ENCODE measurements at regions of chr14 and their contacts with region 1.

Region 1: GRCh38 chr14:65824285-65824977 is 411.9 kb downstream of the FUT8 start:
- DNase-seq: peak; percentile 21
- H3K4me3 ChIP-seq: no peak overlapping the region
- CTCF ChIP-seq: peak; percentile 87

Region 2: GRCh38 chr14:65164068-65164824 is 660.2 kb before region 1 on chr14:
- CTCF ChIA-PET with region 1: interaction called, 201 read pairs
- POLR2A ChIA-PET with region 1: no interaction called
- DNase-seq: no peak
- H3K4me3 ChIP-seq: no peak overlapping the region
- CTCF ChIP-seq: peak; percentile 22

Region 3: DNA sequence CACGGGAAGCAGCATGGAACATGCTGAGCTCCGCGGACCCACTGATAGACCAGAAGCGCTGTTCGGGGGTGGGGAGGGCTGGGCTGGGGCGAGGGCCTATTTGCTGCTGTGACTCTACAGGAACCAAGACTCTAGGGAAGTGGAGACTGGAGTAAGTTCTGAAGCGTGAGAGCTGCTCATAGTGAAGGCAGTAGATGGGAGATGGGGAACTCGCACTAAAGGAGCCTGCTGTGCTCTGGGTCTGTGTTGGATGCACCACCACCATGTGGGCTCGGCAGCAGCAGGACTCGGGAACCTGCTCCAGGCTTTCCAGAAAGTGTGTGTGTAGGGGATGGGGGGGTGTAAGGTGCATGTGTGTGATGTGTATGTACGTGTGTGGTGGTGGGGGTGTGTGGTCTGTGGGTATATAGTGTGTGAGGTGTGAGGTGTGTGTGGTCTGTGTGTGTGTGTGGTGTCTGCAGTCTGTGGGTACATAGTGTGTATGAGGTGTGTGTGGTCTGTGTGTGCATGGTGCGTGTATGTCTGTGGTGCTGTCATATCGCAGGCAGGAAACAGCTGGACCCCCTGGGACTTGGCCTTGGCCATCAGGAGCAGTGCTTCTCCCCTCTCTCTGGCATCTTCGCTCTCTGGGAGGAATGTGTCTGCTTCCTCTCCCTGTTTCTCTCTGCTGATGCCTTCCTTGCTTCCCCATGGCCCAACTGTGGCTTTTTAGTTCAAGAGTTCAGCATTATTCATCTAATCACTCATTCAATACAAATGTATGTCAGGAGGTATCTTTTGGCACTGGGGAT is 33.0 kb before region 1 on chr14:
- CTCF ChIA-PET with region 1: interaction called, 24 read pairs
- POLR2A ChIA-PET with region 1: no interaction called
- DNase-seq: peak; percentile 9
- H3K4me3 ChIP-seq: no peak overlapping the region
- CTCF ChIP-seq: no peak

Region 4: DNA sequence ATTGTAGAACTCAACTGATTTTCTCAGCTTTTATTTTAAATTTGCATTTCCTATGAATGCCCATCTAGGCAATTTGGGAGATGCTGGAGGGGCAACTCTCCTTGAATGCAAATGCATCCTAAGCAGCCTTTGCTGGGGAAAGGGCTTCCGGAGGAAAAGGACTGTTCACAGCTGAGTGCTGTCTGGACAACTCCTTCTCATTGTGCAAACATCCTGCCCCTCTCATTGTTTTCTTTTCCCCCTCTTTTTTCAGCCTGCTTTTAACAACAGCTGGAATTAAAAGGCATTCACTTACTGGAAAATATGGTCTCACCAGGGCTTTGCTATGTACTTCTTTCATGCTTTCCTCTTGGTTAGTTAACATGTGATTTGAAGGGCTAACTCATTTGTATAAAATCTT is 14.1 kb before region 1 on chr14:
- CTCF ChIA-PET with region 1: interaction called, 79 read pairs
- POLR2A ChIA-PET with region 1: no interaction called
- DNase-seq: no peak
- H3K4me3 ChIP-seq: no peak overlapping the region
- CTCF ChIP-seq: no peak

Region 5: GRCh38 chr14:65847075-65847847 is 22.8 kb after region 1 on chr14:
- CTCF ChIA-PET with region 1: interaction called, 17 read pairs
- POLR2A ChIA-PET with region 1: no interaction called
- DNase-seq: no peak
- H3K4me3 ChIP-seq: no peak overlapping the region
- CTCF ChIP-seq: no peak

Region 6: GRCh38 chr14:66105815-66106214 is 281.4 kb after region 1 on chr14:
- CTCF ChIA-PET with region 1: no interaction called
- POLR2A ChIA-PET with region 1: no interaction called
- DNase-seq: peak; percentile 7
- H3K4me3 ChIP-seq: no peak overlapping the region
- CTCF ChIP-seq: no peak

Region 7: DNA sequence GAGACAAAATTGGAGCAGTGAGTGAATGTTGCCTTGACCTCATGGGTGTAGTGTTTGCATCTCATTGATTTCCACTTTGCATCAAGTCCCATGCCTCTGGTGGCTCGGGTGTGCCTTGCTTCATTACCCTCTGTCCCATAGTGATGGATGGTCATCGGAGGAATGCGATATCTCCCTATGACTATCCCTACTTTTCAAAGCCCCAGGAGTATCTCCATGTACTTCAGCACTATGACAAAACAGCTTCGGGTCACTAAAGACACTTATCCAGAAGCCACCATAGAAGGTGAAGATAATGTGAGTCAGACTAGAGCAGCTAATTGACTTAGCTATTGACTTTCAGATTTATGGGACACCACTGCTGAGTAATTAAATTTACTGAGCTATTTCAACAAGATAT is 306.7 kb after region 1 on chr14:
- CTCF ChIA-PET with region 1: no interaction called
- POLR2A ChIA-PET with region 1: no interaction called
- DNase-seq: no peak
- H3K4me3 ChIP-seq: no peak overlapping the region
- CTCF ChIP-seq: no peak

Measured in AG04449 (cell line).